B cell (primary cell): ENCODE measurements at regions of chr5 and their contacts with region 1.

Region 1: DNA sequence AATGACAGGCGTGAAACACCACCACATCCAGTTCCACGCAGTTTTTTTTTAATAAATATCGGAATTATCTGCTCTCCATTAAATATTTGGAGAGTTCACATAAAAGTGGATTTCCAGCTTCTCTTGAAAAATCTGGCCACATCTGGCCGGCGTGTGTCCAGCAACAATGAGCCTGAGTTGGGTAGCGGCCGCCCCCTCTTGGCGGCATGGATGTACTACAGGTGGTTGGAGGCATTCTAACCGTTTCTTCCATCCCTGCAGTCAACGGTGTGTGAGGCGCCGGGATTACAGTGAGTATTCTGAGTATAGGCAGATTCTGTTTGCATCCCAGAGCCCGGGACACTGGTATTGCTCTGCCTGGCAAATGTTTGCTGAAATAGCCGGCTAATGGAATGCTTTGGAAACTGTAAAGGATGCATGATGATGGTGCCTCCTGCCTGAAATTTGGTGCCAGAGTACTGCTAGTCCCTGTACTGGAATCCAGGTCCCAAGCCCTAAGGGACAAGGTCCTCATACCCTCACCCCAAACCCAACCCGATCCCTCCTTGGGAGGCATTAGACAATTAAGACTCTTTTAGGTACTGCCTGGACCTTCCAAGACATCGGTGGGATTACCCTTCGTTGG is 13.6 kb upstream of the GM2A start:
- DNase-seq: peak; percentile 66
- ATAC-seq: peak; percentile 64
- H3K4me3 ChIP-seq: peak overlapping the region in 2 of 5 experiments; percentile 7 to 20
- H3K4me3 Mint-ChIP-seq: peak overlapping the region; percentile 84
- H3K27ac ChIP-seq: no peak overlapping the region
- H3K27ac Mint-ChIP-seq: peak overlapping the region; percentile 82
- H3K4me1 ChIP-seq: peaks cover 81 to 82% of the 10 kb centered on the region in 2 donors
- H3K4me1 Mint-ChIP-seq: peaks cover 95% of the 10 kb centered on the region
- H3K27me3 ChIP-seq: no peaks in the 10 kb centered on the region
- H3K27me3 Mint-ChIP-seq: no peaks in the 10 kb centered on the region
- CTCF ChIP-seq: peak; percentile 99

Region 2: GRCh38 chr5:150918613-150919012 is 320.7 kb before region 1 on chr5:
- CTCF ChIA-PET with region 1: no interaction called
- POLR2A ChIA-PET with region 1: no interaction called
- intact Hi-C with region 1: no loop called
- DNase-seq: no peak
- ATAC-seq: no peak
- H3K4me3 ChIP-seq: no peak overlapping the region
- H3K4me3 Mint-ChIP-seq: no peak overlapping the region
- H3K27ac ChIP-seq: no peak overlapping the region
- H3K27ac Mint-ChIP-seq: no peak overlapping the region
- H3K4me1 ChIP-seq: no peaks in the 10 kb centered on the region
- H3K4me1 Mint-ChIP-seq: no peaks in the 10 kb centered on the region
- H3K27me3 ChIP-seq: peaks cover 0 to 7% (median 0%) of the 10 kb centered on the region in 4 experiments
- H3K27me3 Mint-ChIP-seq: peaks cover 14% of the 10 kb centered on the region
- CTCF ChIP-seq: no peak

Region 3: DNA sequence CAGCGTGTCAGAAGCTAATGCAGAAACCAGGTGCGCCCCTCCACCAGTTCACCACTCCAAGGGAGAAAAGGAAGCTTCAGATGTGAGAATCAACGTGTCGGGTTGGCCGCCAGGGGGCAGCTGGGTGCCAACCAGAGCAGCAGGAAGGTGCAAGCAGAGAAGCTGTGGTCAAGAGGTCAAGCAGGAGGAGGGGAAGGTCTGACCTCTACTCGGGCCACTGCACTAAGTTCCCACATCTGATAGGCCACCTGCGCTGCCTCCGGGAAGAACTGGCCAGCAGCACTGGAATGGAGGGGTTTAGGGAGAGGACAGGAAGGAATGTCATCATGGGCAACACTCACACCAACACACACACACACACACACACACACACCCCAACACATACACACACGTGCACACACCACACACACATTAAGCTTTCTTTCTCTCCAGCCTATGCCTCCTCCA is 113.1 kb before region 1 on chr5:
- CTCF ChIA-PET with region 1: interaction called, 158 read pairs
- POLR2A ChIA-PET with region 1: interaction called, 11 read pairs
- intact Hi-C with region 1: loop called (anchors 1 kb)
- DNase-seq: peak; percentile 80
- ATAC-seq: no peak
- H3K4me3 ChIP-seq: peak overlapping the region in 1 of 5 experiments; percentile 12
- H3K4me3 Mint-ChIP-seq: peak overlapping the region; percentile 88
- H3K27ac ChIP-seq: peak overlapping the region; percentile 87 to 91
- H3K27ac Mint-ChIP-seq: peak overlapping the region; percentile 91
- H3K4me1 ChIP-seq: peaks cover 50 to 74% of the 10 kb centered on the region in 2 donors
- H3K4me1 Mint-ChIP-seq: peaks cover 78% of the 10 kb centered on the region
- H3K27me3 ChIP-seq: no peaks in the 10 kb centered on the region
- H3K27me3 Mint-ChIP-seq: no peaks in the 10 kb centered on the region
- CTCF ChIP-seq: peak; percentile 78

Region 4: GRCh38 chr5:151150471-151151262 is 88.7 kb before region 1 on chr5:
- CTCF ChIA-PET with region 1: interaction called, 12 read pairs
- POLR2A ChIA-PET with region 1: no interaction called
- intact Hi-C with region 1: no loop called
- DNase-seq: peak; percentile 61
- ATAC-seq: peak; percentile 69
- H3K4me3 ChIP-seq: peak overlapping the region in 3 of 5 experiments; percentile 9 to 22 (median 18)
- H3K4me3 Mint-ChIP-seq: peak overlapping the region; percentile 69
- H3K27ac ChIP-seq: peak overlapping the region; percentile 74 to 91
- H3K27ac Mint-ChIP-seq: peak overlapping the region; percentile 93
- H3K4me1 ChIP-seq: peaks cover 100% of the 10 kb centered on the region in 2 donors
- H3K4me1 Mint-ChIP-seq: peaks cover 97% of the 10 kb centered on the region
- H3K27me3 ChIP-seq: no peaks in the 10 kb centered on the region
- H3K27me3 Mint-ChIP-seq: no peaks in the 10 kb centered on the region
- CTCF ChIP-seq: no peak

Region 5: GRCh38 chr5:151174612-151175101 is 64.7 kb before region 1 on chr5:
- CTCF ChIA-PET with region 1: interaction called, 265 read pairs
- POLR2A ChIA-PET with region 1: interaction called, 8 read pairs
- intact Hi-C with region 1: no loop called
- DNase-seq: no peak
- ATAC-seq: no peak
- H3K4me3 ChIP-seq: no peak overlapping the region
- H3K4me3 Mint-ChIP-seq: no peak overlapping the region
- H3K27ac ChIP-seq: no peak overlapping the region
- H3K27ac Mint-ChIP-seq: peak overlapping the region; percentile 53
- H3K4me1 ChIP-seq: peaks cover 43 to 44% of the 10 kb centered on the region in 2 donors
- H3K4me1 Mint-ChIP-seq: peaks cover 58% of the 10 kb centered on the region
- H3K27me3 ChIP-seq: no peaks in the 10 kb centered on the region
- H3K27me3 Mint-ChIP-seq: no peaks in the 10 kb centered on the region
- CTCF ChIP-seq: no peak

Region 6: DNA sequence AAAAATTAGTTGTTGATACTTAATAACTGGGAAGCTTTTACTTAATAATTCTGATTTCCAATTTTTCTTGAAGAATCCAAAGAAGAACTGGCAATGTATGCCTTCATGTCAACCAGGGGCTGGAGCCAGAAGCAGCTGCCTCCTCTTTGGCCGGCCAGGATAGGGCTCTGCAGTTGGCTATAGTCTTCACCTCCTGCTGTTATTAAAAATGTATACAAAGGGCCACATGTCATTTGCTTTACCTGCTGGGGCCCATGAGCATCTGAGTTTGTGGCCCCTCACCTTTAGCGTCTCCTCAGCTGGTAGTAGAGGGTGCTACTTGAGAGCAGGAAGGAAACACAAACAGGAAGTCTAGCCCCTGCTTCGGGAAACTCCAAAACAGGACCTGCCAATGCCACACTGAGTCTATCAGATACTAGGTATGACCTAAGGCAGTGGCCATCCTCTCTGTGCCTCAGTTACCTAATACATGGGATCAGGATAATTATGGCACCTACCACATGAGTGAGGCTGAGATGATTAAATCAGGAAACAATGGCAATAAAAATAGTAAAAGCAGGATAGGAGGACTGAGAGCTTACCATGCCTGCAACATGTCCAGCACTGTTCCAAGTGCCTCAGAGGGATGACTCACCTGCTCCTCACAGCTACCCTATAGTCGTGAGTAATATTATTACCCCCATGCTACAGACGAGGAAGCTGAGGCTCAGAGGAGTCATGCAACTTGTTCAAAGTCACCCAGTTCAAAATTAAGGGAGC is 36.8 kb before region 1 on chr5:
- CTCF ChIA-PET with region 1: interaction called, 12 read pairs
- POLR2A ChIA-PET with region 1: interaction called, 3 read pairs
- intact Hi-C with region 1: no loop called
- DNase-seq: peak; percentile 58
- ATAC-seq: peak; percentile 56
- H3K4me3 ChIP-seq: no peak overlapping the region
- H3K4me3 Mint-ChIP-seq: peak overlapping the region; percentile 67
- H3K27ac ChIP-seq: peak overlapping the region; percentile 7 to 74
- H3K27ac Mint-ChIP-seq: peak overlapping the region; percentile 75
- H3K4me1 ChIP-seq: peaks cover 27 to 37% of the 10 kb centered on the region in 2 donors
- H3K4me1 Mint-ChIP-seq: peaks cover 55% of the 10 kb centered on the region
- H3K27me3 ChIP-seq: no peaks in the 10 kb centered on the region
- H3K27me3 Mint-ChIP-seq: no peaks in the 10 kb centered on the region
- CTCF ChIP-seq: no peak

Region 7: DNA sequence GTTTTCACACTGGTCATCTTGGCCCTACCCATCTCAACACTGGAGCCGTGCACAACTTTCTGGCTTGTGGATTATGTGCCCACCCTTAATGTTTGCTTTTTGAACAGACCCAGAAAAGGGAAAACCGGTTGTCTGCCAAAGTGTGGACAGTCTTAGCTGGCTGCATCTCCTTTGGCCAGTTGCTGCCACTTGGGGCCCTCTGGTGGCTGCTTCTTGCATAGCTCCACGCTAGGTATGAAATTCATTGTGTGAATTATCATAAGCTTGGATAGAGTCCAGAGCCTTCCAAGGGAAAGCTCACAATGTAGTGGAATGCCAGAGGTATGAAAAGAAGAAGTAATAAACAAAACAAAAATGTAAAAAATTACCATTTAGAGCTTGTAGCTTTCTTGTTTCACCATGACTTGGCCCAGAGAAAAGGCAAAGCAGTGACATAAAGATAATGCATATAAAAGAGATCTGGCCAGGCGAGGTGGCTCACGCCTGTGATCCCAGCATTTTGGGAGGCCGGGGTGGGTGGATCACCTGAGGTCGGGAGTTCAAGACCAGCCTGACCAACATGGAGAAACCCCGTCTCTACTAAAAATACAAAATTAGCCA is 76.7 kb after region 1 on chr5:
- CTCF ChIA-PET with region 1: interaction called, 12 read pairs
- POLR2A ChIA-PET with region 1: no interaction called
- intact Hi-C with region 1: no loop called
- DNase-seq: peak; percentile 65
- ATAC-seq: peak; percentile 76
- H3K4me3 ChIP-seq: no peak overlapping the region
- H3K4me3 Mint-ChIP-seq: no peak overlapping the region
- H3K27ac ChIP-seq: no peak overlapping the region
- H3K27ac Mint-ChIP-seq: no peak overlapping the region
- H3K4me1 ChIP-seq: peaks cover 9 to 16% of the 10 kb centered on the region in 2 donors
- H3K4me1 Mint-ChIP-seq: peaks cover 10% of the 10 kb centered on the region
- H3K27me3 ChIP-seq: no peaks in the 10 kb centered on the region
- H3K27me3 Mint-ChIP-seq: no peaks in the 10 kb centered on the region
- CTCF ChIP-seq: peak; percentile 95